ENCODE measurements at regions of chr2 and their contacts with region 1.

Region 1: GRCh38 chr2:32946314-32947075 is at the start of gene LTBP1:
- DNase-seq: peak; percentile 89
- ATAC-seq: peak; percentile 90
- total RNA-seq, gene LTBP1: 90.4 TPM

Region 2: DNA sequence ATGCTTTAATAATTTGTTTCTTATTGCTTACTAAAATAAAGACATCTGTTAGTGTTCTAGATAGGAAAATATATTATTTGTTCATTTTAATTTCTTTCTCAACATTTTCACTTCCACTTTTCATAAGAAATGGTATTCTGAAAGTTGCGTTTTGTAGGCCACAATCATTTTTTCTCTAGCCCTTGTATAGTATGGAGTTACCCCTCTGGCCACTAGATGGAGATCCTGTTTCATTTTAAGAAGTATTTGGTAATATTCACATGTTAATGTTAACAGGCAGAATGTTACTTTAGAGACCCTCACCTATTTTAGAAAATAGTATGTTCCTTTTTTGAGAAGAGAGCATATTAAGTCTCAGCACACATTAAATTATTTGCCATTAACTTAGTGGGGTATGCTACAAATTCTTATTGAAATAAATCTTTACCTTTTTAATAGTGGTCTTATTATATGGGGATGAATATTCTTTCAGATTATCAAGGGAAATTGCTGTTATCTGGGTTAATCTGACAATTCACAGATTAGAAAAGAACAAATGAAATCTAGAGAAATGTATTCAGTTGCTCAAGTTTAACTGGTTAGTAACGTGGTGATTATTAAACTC is 392.6 kb before region 1 on chr2:
- intact Hi-C with region 1: loop called (anchors 10 kb)
- DNase-seq: no peak
- ATAC-seq: peak; percentile 67

Region 3: DNA sequence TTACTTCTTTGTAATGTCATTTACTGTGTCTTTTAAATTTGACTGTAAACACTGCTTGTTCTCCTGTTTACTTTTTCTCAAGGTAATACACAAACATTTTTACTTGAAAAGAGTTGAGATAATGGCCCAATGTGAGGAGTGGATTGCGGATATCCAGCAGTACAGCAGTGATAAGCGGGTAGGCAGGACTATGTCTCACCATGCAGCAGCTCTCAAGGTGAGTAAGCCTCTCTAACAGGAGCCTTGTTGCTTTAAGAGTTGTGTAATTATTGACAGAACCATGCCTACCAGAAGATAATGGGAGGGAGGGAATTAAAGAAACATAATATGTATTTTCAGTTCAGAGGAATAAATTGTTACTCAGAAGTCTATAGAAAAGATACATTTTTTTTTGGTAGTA is 335.1 kb before region 1 on chr2:
- intact Hi-C with region 1: no loop called
- DNase-seq: no peak
- ATAC-seq: no peak

Region 4: GRCh38 chr2:32627814-32628579 is 318.5 kb before region 1 on chr2 and contains the start of gene TTC27:
- intact Hi-C with region 1: loop called (anchors 10 kb)
- DNase-seq: peak; percentile 97
- ATAC-seq: peak; percentile 99
- total RNA-seq, gene TTC27: 8.1 TPM

Region 5: GRCh38 chr2:33023728-33024500 is 77.4 kb after region 1 on chr2:
- intact Hi-C with region 1: loop called (anchors 2 kb)
- DNase-seq: no peak
- ATAC-seq: no peak

Region 6: DNA sequence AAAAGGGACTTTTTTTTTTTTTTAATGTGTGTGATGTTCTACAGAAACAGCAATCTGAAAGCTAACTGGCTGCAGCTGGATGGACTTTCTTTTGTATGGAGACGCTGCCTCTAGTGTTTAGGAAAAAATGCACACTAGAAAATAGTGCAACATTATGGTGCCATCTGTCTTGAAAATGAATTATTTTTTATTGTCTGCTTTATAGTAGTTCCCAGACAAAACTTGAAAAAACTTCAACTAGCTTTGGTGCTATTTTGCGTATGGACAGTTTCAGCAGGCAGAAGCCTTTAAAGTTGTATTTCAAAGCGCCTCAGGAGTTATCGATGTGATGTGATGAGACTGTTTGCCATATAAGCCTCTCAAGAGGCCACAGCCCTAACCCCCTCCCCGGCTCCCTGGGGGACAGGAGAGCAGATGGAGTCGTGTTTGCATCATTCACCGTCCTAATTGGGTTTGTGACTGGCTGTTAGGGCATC is 87.1 kb after region 1 on chr2:
- intact Hi-C with region 1: loop called (anchors 2 kb)
- DNase-seq: no peak
- ATAC-seq: peak; percentile 72

Region 7: GRCh38 chr2:33210626-33211025 is 264.1 kb after region 1 on chr2:
- intact Hi-C with region 1: loop called (anchors 10 kb)
- DNase-seq: no peak
- ATAC-seq: peak; percentile 58

Region 8: DNA sequence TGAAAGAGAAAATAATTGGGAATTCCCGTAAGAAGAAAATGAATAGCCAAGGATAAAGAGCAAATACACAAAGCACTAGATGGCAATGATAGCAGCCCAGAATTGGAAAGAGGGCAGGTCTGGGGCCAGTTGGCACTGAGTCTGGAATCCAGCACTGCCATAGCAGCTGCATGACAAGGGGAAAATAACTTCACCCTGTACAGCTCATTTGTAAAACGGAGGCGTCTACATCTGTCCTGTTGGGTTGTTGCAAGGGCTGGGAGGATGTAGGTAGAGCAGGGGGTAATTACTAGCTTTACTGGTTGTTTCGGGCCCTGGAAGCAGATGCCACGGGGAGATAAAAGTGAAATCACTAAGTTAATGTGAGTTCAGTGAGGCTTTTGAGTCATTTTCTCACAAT is 420.0 kb after region 1 on chr2:
- intact Hi-C with region 1: loop called (anchors 10 kb)
- DNase-seq: no peak
- ATAC-seq: peak; percentile 91

Measured in Right ventricle myocardium inferior (tissue), 1 donor.